Panc1 (cell line): ENCODE measurements at regions of chr3 and their contacts with region 1.

Region 1: DNA sequence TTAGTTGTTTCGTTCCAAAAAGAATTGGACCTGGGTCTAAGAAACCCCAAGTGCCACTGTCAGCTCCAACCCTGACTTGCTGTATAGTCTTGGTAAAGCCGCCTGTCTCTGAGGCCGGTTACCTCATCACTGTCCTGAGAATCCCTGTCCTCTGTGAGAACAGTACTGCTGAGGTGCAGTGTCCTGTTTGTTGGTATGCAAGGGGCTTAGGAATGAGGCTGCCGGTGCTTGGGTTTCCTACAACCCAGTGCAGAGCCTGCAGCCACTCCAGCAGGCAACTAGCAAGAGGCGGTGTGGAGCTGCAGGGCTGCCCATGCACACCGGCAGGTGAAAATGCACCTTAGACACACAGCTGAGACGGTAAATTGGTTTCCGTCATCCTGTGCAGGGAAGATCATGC is 52.0 kb upstream of the ATG7 start:
- DNase-seq: no peak
- ATAC-seq: peak; percentile 47
- H3K4me3 ChIP-seq: no peak overlapping the region
- H3K27ac ChIP-seq: no peak overlapping the region
- H3K4me1 ChIP-seq: peaks cover 7% of the 10 kb centered on the region; the same call in 1 of the 2 replicates
- H3K27me3 ChIP-seq: no peaks in the 10 kb centered on the region
- CTCF ChIP-seq: no peak

Region 2: DNA sequence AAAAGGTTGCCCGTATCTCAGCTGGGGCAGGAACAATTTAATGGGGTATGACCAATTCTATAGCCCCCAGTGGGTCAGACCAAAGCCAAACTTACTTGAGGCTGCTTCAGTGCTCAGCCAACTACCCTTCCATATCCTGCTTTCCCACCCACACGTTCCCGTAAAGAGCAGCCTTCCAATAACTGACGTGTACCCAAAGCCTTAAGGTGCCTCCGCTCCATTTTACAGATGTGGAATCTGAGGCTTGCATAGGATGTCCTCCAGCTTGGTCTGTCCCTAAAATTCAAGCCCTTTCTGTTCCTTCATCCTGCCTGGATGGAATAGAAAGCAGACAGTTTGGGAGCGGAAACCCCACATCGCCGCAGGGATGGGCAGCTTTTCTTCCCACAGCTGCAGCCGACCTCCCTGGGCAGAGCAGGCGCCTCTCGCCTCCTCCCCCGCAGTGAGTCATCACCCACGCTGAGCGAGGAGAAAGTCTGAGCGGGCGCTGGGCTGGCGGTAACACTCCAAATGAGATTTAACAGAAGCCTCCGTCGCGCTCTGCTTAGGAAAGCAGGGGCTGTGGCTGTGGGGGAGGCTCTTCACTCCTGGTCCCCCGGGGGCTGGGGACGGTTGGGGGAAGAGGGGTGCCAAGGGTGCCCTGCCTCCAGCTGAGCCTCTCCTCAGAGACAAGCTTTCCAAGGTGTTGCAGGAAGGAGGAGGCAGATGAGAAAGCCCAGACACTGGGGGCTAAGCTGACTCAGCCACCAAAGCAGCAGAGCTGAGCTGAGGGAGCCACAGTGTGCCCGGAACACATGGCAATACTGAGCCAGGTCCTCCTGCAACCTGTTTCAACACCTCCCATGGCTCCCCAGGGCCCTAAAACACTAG is 123.7 kb before region 1 on chr3:
- CTCF ChIA-PET with region 1: no interaction called
- POLR2A ChIA-PET with region 1: interaction called, 16 read pairs
- in situ Hi-C with region 1: no loop called
- intact Hi-C with region 1: no loop called
- DNase-seq: no peak
- ATAC-seq: peak; percentile 93
- H3K4me3 ChIP-seq: peak overlapping the region; percentile 35 to 60
- H3K27ac ChIP-seq: peak overlapping the region; percentile 75
- H3K4me1 ChIP-seq: peaks cover 3% of the 10 kb centered on the region
- H3K27me3 ChIP-seq: no peaks in the 10 kb centered on the region
- CTCF ChIP-seq: no peak; the same call in 1 of the 2 replicates

Region 3: DNA sequence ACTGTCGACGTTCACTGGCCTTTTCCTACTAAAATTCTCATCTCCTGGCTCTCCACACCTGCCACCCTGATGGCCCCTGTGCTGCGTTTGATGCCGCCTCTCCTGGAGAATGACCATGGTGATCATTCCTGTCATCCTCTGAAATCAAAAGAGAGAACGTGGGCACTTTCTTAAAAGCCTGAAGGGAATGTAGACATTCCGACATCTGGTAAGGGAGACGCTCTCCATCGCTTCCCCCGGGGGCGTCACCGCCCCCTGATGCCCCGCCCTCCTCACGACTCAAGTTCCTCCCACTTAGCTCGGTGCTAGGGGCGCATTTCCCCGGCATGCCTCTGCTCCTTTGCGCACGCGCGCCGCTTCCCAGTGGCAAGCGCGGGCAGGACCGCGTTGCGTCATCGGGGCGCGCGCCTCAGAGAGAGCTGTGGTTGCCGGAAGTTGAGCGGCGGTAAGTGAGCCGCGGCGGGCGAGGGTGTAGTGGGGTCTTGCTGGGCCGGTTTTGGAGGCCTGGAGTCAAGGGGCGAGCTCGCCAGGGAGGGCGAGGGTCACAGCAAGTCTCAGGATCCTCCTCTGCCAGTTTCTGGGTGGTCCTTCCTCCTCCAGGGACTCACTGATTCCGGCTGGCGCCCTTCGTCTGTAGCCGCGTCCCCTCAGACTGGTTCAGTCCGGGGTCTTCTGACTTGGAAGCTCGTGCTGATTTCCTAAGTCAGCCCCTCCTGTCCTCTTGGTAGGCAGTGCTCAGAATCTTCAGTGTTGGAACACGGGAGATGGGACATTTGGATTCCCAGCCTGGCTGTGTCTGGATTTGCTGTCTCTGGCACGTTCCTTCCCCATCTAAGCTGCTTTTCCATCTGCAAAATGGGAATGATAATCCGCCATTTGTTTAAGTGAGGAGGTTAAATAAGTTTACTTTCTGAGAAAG is 52.0 kb after region 1 on chr3 and contains the start of gene ATG7:
- CTCF ChIA-PET with region 1: no interaction called
- POLR2A ChIA-PET with region 1: no interaction called
- in situ Hi-C with region 1: no loop called
- intact Hi-C with region 1: no loop called
- DNase-seq: peak; percentile 79
- ATAC-seq: peak; percentile 95
- H3K4me3 ChIP-seq: peak within 1 kb of the TSS; percentile 100
- H3K27ac ChIP-seq: peak within 1 kb of the TSS; percentile 96
- H3K4me1 ChIP-seq: peaks cover 21% of the 10 kb centered on the region
- H3K27me3 ChIP-seq: no peaks in the 10 kb centered on the region
- CTCF ChIP-seq: no peak
- total RNA-seq, gene ATG7: 36.0 TPM